Naive thymus-derived CD4-positive, alpha-beta T cell (primary cell): ENCODE measurements at regions of chrX and their contacts with region 1.

Region 1: DNA sequence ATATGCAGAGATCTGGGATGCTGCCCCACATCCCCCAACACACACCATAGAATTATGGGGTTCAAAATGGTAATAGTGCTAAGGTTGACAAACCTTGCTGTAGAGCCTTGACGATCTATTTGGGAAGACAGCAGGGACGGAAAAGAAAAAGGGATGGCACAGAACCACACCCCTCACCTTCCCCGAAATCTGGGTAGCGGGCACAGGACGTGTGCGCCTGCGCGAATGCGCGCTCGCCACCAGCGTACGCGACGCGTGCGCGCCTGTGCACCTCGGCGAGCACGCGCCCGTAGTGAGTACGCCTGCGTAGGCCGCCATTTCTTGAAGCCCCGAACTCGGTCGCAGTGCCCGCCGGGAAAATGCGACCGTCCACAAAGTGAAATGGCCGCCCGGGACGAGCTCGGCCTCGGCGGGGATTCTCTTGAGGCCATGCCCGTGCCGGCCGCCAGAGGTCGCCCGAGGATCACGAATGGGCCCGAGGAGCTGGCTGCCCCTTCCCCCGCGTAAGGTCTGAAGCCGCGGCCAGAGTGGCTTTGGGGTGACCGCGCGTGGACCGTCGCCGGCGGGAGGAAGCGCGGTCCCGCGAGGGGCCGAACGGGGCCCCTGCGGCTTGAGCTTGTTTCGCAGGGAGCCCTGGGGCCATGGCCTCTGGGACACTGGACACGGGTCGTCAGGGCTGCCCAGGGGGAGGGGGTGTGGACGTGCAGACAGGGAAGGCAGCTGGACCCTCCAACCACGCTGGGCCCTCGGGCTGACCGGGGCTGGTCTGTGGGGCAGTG is 43.6 kb downstream of the ZNF185 start:
- DNase-seq: peak; percentile 76 to 92 (median 88)
- ATAC-seq: peak; percentile 98
- H3K4me3 ChIP-seq: peak overlapping the region; percentile 67
- H3K4me3 Mint-ChIP-seq: peak overlapping the region; percentile 75 to 89 (median 86)
- H3K27ac ChIP-seq: peak overlapping the region; percentile 77
- H3K27ac Mint-ChIP-seq: peak overlapping the region; percentile 84 to 93 (median 87)
- H3K4me1 ChIP-seq: peaks cover 8 to 11% of the 10 kb centered on the region in 2 donors
- H3K4me1 Mint-ChIP-seq: peaks cover 0 to 13% (median 5%) of the 10 kb centered on the region in 7 donors
- H3K27me3 ChIP-seq: no peaks in the 10 kb centered on the region
- H3K27me3 Mint-ChIP-seq: no peaks in the 10 kb centered on the region

Region 2: GRCh38 chrX:150982788-150983520 is 1958.6 kb before region 1 on chrX and contains the start of gene HMGB3:
- CTCF ChIA-PET with region 1: no interaction called
- POLR2A ChIA-PET with region 1: no interaction called
- intact Hi-C with region 1: loop called in 1 of 2 experiments (anchors 5 kb)
- DNase-seq: peak; percentile 45 to 80 (median 59)
- ATAC-seq: peak; percentile 98
- H3K4me3 ChIP-seq: peak within 1 kb of the TSS; percentile 48
- H3K4me3 Mint-ChIP-seq: peak within 1 kb of the TSS; percentile 66 to 84 (median 73)
- H3K27ac ChIP-seq: no peak within 1 kb of the TSS
- H3K27ac Mint-ChIP-seq: peak within 1 kb of the TSS in 2 of 9 donors; percentile 29 to 59
- H3K4me1 ChIP-seq: no peaks in the 10 kb centered on the region
- H3K4me1 Mint-ChIP-seq: peaks cover 0 to 16% (median 6%) of the 10 kb centered on the region in 7 donors
- H3K27me3 ChIP-seq: no peaks in the 10 kb centered on the region
- H3K27me3 Mint-ChIP-seq: peaks cover 0 to 18% (median 7%) of the 10 kb centered on the region in 5 donors
- total RNA-seq, gene HMGB3: 0.51 to 23.5 (median 2.6) TPM

Region 3: DNA sequence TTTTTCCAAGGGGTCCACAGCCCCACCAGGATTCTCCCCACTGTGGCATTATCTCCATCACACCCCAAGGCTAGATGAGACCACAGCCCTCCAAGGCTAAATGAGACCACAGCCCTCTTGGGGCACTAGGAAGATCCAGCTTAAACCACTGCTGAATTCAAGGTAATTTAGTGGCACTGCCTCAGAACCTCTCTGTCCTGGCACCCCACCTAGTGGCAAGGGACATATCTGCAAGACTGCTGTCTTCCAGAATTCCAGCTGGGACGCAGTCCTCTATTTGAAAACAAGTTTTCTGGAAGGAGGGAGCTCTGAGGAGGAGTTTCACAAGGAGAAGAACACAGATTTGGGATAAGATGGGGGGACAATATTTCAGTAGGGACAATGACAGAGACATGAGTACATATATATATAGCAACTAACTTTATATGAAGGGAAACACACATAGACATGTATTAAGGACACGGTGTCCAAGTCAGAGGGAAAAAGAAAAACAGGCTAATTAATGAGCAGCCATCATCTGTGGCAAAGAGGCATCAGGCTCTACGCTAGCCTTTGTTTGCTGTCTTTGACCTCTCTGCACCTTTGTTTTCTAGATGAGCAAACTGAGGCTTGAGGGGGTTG is 120.3 kb before region 1 on chrX:
- CTCF ChIA-PET with region 1: no interaction called
- POLR2A ChIA-PET with region 1: no interaction called
- intact Hi-C with region 1: no loop called
- DNase-seq: peak in 1 of 9 donors; percentile 23
- ATAC-seq: no peak
- H3K4me3 ChIP-seq: no peak overlapping the region
- H3K4me3 Mint-ChIP-seq: no peak overlapping the region
- H3K27ac ChIP-seq: no peak overlapping the region
- H3K27ac Mint-ChIP-seq: no peak overlapping the region
- H3K4me1 ChIP-seq: no peaks in the 10 kb centered on the region
- H3K4me1 Mint-ChIP-seq: peaks cover 0 to 3% (median 0%) of the 10 kb centered on the region in 7 donors
- H3K27me3 ChIP-seq: no peaks in the 10 kb centered on the region
- H3K27me3 Mint-ChIP-seq: peaks cover 0 to 10% (median 8%) of the 10 kb centered on the region in 5 donors

Region 4: DNA sequence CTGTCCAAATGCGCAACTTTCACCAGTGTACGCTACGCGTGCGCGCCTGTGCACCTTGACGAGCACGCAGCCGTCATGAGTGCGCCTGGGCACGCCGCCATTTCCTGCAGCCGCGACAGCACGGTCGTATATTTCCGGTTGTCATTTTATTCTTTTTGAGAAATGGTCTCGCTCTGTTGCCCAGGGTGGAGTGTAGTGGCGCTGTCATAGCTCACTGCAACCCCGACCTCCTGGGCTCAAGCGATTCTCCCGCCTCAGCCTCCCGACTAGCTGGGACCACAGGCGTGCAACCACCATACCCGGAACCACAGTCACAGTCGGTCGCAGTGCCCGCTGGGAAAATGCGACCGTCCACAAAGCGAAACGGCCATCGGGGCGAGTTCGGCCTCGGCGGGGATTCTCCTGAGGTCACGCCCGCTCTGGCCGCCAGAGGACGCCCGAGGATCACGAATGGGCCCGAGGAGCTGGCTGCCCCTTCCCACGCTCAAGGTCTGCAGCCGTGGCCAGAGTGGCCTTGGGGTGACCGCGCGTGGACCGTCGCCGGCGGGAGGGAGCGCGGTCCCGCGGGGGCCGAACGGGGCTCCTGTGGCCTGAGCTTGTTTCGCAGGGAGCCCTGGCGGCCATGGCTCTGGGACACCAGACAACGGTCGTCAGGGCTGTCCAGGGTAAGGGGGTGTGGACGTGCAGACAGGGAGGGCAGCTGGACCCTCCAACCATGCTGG is 91.0 kb after region 1 on chrX:
- CTCF ChIA-PET with region 1: no interaction called
- POLR2A ChIA-PET with region 1: no interaction called
- intact Hi-C with region 1: loop called in 1 of 2 experiments (anchors 2 kb)
- DNase-seq: peak; percentile 32 to 75 (median 53)
- ATAC-seq: peak; percentile 87
- H3K4me3 ChIP-seq: peak overlapping the region; percentile 69
- H3K4me3 Mint-ChIP-seq: peak overlapping the region; percentile 78 to 90 (median 86)
- H3K27ac ChIP-seq: peak overlapping the region; percentile 53
- H3K27ac Mint-ChIP-seq: peak overlapping the region; percentile 68 to 93 (median 87)
- H3K4me1 ChIP-seq: peaks cover 7 to 9% of the 10 kb centered on the region in 2 donors
- H3K4me1 Mint-ChIP-seq: peaks cover 0 to 11% (median 4%) of the 10 kb centered on the region in 7 donors
- H3K27me3 ChIP-seq: no peaks in the 10 kb centered on the region
- H3K27me3 Mint-ChIP-seq: no peaks in the 10 kb centered on the region

Region 5: GRCh38 chrX:153507484-153508178 is 566.1 kb after region 1 on chrX:
- CTCF ChIA-PET with region 1: interaction called, 14 read pairs
- POLR2A ChIA-PET with region 1: interaction called, 3 read pairs
- intact Hi-C with region 1: loop called in 1 of 2 experiments (anchors 1 kb)
- DNase-seq: peak; percentile 67 to 83 (median 77)
- ATAC-seq: peak; percentile 99
- H3K4me3 ChIP-seq: no peak overlapping the region
- H3K4me3 Mint-ChIP-seq: peak overlapping the region in 2 of 10 donors; percentile 9 to 13
- H3K27ac ChIP-seq: no peak overlapping the region
- H3K27ac Mint-ChIP-seq: peak overlapping the region in 2 of 9 donors; percentile 32 to 46
- H3K4me1 ChIP-seq: peaks cover 0 to 4% of the 10 kb centered on the region in 2 donors
- H3K4me1 Mint-ChIP-seq: peaks cover 0 to 6% (median 0%) of the 10 kb centered on the region in 7 donors
- H3K27me3 ChIP-seq: no peaks in the 10 kb centered on the region
- H3K27me3 Mint-ChIP-seq: no peaks in the 10 kb centered on the region

Region 6: DNA sequence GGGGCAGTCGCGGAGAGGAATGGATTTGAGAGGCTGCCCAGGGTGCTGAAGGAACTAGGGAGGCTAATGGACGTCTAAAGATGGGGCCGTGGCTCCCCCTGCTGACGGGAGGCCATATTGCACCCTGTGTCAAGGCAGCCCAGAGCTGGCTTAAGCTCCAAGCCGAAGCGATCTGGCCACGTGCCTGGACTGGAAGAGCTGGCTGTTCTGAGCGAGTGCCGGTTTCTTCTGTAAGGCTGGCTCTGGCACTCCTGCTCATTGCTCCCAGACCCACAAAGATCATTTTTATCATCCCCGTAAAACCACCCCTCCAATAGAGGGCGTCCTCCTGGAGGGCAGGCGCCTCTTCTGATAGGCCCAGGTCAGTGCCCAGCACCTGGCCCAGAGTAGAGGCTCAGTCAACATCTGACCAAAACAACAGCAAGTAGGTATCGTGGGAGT is 726.5 kb after region 1 on chrX:
- CTCF ChIA-PET with region 1: interaction called, 14 read pairs
- POLR2A ChIA-PET with region 1: no interaction called
- intact Hi-C with region 1: loop called (anchors 1 to 5 kb)
- DNase-seq: peak; percentile 51 to 78 (median 65)
- ATAC-seq: peak; percentile 93
- H3K4me3 ChIP-seq: no peak overlapping the region
- H3K4me3 Mint-ChIP-seq: peak overlapping the region; percentile 53 to 82 (median 74)
- H3K27ac ChIP-seq: no peak overlapping the region
- H3K27ac Mint-ChIP-seq: peak overlapping the region in 4 of 9 donors; percentile 2 to 51 (median 37)
- H3K4me1 ChIP-seq: no peaks in the 10 kb centered on the region
- H3K4me1 Mint-ChIP-seq: peaks cover 5 to 10% (median 7%) of the 10 kb centered on the region in 7 donors
- H3K27me3 ChIP-seq: no peaks in the 10 kb centered on the region
- H3K27me3 Mint-ChIP-seq: peaks cover 0 to 28% (median 7%) of the 10 kb centered on the region in 5 donors